HCT116 (cell line): ENCODE measurements at regions of chr9 and their contacts with region 1.

Region 1: GRCh38 chr9:96418074-96418809 is at the start of gene ZNF367:
- DNase-seq: peak; percentile 90
- ATAC-seq: peak; percentile 78
- H3K4me3 ChIP-seq: peak within 1 kb of the TSS; percentile 69 to 73
- H3K27ac ChIP-seq: peak within 1 kb of the TSS; percentile 99
- H3K4me1 ChIP-seq: peaks cover 22 to 44% of the 10 kb centered on the region in 2 experiments
- H3K27me3 ChIP-seq: no peaks in the 10 kb centered on the region
- CTCF ChIP-seq: no peak
- POLR2A ChIP-seq: no peak
- RAD21 ChIP-seq: no peak
- total RNA-seq, gene ZNF367: 18.1 TPM

Region 2: GRCh38 chr9:96136992-96137670 is 281.1 kb before region 1 on chr9:
- CTCF ChIA-PET with region 1: no interaction called
- POLR2A ChIA-PET with region 1: no interaction called
- RAD21 ChIA-PET with region 1: no interaction called
- intact Hi-C with region 1: no loop called
- DNase-seq: no peak
- ATAC-seq: no peak
- H3K4me3 ChIP-seq: no peak overlapping the region
- H3K27ac ChIP-seq: no peak overlapping the region
- H3K4me1 ChIP-seq: no peaks in the 10 kb centered on the region
- H3K27me3 ChIP-seq: no peaks in the 10 kb centered on the region
- CTCF ChIP-seq: no peak
- POLR2A ChIP-seq: no peak
- RAD21 ChIP-seq: no peak

Region 3: DNA sequence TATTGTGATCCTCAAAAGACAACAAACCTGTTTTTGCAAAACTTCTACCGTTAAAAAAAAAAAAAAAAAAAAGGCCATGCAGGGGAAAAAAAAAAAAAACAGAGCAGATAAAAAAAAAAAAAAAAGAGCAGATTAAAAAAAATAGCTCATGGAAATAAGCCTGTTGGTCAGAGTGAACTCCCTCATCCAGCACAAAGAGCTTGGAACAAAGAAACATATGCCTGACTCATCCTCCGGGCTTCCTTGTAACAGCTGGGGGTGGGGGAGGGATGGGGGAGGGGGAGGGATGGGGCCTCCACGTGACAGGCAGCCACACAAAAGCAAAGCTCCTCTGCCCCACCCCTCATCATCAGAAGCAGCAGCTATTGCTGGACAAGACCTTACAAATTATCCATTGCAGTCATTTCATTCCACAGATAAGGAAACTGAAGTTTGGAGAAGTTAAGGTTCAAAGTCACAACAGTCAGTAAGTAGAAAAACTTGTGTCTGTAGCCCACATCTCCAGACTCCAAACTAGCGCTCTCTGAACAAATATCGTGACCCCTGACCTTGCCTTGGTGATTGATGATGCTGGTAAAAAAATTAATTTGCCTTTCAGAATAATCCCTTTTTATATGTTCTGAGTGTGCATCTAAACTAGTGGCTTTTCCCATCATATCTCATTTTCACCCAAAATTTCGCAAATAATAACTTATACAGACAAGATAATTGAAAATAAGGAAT is 73.6 kb before region 1 on chr9:
- CTCF ChIA-PET with region 1: no interaction called
- POLR2A ChIA-PET with region 1: no interaction called
- RAD21 ChIA-PET with region 1: no interaction called
- intact Hi-C with region 1: loop called (anchors 5 kb)
- DNase-seq: peak; percentile 73
- ATAC-seq: peak; percentile 35
- H3K4me3 ChIP-seq: peak overlapping the region in 1 of 2 experiments; percentile 15; a peak in 1 of 4 replicates
- H3K27ac ChIP-seq: peak overlapping the region; percentile 91; the same call in 1 of the 2 replicates
- H3K4me1 ChIP-seq: peaks cover 48 to 58% of the 10 kb centered on the region in 2 experiments
- H3K27me3 ChIP-seq: no peaks in the 10 kb centered on the region
- CTCF ChIP-seq: no peak
- POLR2A ChIP-seq: no peak
- RAD21 ChIP-seq: no peak

Region 4: DNA sequence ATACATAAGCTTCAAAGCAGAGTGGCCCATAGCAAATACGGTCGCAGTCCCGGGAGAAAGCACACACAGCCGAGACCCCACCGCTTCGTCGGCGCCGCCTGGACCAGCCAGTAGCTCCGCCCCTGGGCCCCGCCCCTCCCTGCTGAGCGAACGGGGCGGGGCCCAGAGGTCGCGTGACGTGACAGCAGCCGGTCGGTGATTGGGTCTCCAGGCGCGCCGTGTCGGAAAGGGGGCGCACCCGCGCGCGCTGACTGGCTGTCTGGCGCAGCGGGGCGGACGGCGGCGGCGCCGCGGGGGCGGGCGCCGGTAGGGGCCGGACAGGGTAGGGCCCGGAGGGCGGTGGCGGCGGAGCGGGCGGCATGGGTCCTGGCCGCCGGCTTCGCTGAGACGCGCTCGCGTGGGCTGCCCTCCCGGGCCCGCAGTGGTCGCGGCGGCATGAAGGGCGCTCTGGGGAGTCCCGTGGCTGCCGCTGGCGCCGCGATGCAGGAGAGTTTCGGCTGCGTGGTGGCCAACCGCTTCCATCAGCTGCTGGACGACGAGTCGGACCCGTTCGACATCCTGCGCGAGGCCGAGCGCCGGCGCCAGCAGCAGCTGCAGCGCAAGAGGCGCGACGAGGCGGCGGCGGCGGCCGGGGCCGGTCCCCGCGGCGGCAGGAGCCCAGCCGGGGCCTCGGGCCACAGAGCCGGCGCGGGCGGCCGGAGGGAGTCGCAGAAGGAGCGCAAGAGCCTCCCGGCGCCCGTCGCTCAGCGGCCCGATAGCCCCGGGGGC is 31.8 kb after region 1 on chr9 and contains the start of gene HABP4:
- CTCF ChIA-PET with region 1: no interaction called
- POLR2A ChIA-PET with region 1: no interaction called
- RAD21 ChIA-PET with region 1: no interaction called
- intact Hi-C with region 1: loop called (anchors 1 kb)
- DNase-seq: peak; percentile 76
- ATAC-seq: peak; percentile 94
- H3K4me3 ChIP-seq: peak within 1 kb of the TSS; percentile 66 to 70
- H3K27ac ChIP-seq: peak within 1 kb of the TSS; percentile 73
- H3K4me1 ChIP-seq: peaks cover 4 to 31% of the 10 kb centered on the region in 2 experiments; a peak in 3 of 4 replicates
- H3K27me3 ChIP-seq: no peaks in the 10 kb centered on the region
- CTCF ChIP-seq: no peak
- POLR2A ChIP-seq: no peak
- RAD21 ChIP-seq: no peak
- total RNA-seq, gene HABP4: 21.0 TPM

Region 5: DNA sequence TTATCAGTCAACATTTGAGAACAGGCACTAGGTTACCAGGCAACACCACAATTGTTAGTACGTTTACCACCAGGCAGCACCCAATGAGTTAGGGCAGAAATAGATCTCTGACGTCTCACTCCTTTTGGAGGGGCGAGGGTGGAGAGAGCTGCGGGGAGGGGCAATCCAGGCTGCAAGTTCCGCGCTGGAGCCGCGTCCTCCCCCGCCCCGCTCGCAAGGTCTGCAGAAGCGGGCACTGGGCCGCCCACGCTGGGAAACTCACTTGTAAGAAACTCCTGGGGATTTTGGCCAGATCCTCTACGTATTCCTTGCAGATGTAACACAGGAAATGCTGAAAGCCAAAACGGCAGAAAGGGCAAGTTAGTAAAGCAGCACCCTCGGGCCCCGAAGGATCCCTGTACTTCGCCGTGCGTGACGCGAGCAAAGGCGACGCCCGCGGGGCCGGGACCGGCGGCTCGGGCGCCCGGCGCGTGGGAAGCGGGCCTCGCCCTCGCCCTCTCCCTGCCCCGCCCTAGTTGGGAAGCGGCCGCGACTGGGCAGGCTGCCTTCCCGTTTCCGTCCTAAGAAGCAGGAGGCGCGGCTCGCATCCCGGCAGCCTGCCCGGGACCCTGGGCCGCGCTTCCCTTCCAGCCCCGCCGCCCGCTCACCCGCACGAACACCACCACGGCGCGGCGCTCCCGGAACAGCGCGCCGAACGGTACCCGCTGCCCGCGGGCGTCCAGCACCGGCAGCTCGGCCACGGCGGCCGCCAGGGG is 236.4 kb after region 1 on chr9:
- CTCF ChIA-PET with region 1: no interaction called
- POLR2A ChIA-PET with region 1: no interaction called
- RAD21 ChIA-PET with region 1: no interaction called
- intact Hi-C with region 1: loop called (anchors 1 kb)
- DNase-seq: peak; percentile 54
- ATAC-seq: peak; percentile 76
- H3K4me3 ChIP-seq: peak overlapping the region; percentile 47 to 65
- H3K27ac ChIP-seq: peak overlapping the region; percentile 91
- H3K4me1 ChIP-seq: peaks cover 5 to 22% of the 10 kb centered on the region in 2 experiments; a peak in 3 of 4 replicates
- H3K27me3 ChIP-seq: no peaks in the 10 kb centered on the region
- CTCF ChIP-seq: no peak
- POLR2A ChIP-seq: no peak
- RAD21 ChIP-seq: no peak